ENCODE measurements at regions of chr1 and their contacts with region 1.

Region 1: DNA sequence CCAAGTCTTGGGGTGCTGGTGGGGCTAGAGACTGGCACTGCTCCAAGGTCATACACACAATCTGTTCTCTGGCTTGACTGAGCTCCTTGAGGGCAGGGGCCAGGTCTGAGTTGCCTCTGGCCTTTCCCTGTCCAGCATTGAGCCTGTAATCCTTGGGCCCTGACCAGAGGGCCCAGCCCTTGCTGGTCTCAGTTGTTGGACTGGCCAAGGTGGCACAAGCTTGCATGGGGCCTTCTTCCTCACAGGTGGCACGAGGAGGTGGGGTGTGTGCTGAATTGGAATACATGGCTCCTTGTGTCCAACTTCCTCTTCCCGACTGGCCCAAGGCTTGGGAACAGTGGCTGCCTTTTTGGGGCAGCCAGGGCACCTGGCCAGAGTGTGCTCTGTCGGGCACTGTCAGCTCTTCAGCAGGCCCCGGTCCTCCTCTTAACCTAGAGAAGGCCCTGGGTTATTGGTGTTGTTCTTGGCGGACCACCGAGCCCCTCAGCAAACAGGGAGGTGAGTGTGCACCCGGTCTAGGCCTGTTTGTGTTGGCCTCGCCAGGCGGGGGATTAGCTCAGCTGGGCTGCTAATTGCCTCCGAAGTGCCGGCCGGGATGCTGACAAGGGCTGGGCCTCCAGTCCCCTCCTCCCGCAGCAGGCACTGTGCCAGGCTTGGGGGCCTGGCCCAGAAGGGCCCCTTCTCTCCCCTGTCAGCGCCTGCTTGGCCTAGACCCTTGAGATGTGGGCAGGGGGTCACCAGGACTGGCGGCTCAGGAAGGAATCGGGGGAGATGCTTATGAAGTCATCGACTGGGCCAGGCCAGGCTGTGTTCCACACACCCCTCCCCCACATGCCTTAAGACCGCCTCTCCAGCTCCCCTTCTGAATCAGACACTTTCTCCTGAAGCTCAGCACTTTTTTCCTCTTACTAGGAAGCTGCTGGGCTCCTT is 28.5 kb downstream of the WNT4 start:
- DNase-seq: peak; percentile 53
- H3K4me3 ChIP-seq: no peak overlapping the region
- H3K27ac ChIP-seq: no peak overlapping the region
- H3K4me1 ChIP-seq: no peaks in the 10 kb centered on the region; the same call in 1 of the 2 replicates
- H3K27me3 ChIP-seq: no peaks in the 10 kb centered on the region

Region 2: GRCh38 chr1:22416555-22417454 is 302.5 kb after region 1 on chr1:
- in situ Hi-C with region 1: loop called (anchors 10 kb)
- DNase-seq: peak; percentile 86
- H3K4me3 ChIP-seq: no peak overlapping the region
- H3K27ac ChIP-seq: no peak overlapping the region
- H3K4me1 ChIP-seq: peaks cover 25% of the 10 kb centered on the region
- H3K27me3 ChIP-seq: no peaks in the 10 kb centered on the region